Common myeloid progenitor, CD34-positive (primary cell): ENCODE measurements at regions of chr1 and their contacts with region 1.

Region 1: DNA sequence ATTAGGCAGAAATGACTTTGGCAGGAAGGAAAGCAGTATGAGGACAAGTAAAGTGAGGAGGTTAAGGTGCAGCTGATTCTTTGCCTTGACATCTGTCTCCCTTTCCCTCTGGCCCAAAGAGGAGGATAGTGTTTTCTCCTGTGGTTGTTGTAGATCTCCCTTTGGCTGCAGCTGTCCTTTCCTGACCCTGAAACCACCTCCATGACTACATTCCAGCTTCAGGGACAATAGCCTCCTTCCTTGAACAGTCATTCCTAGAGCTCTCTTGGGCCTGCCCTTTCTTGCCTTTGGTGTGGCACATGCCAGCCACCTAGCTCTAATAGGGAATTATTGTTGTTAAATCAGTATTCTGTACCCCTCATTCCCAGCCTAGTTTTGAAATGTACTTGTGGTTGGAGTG is 6.2 kb downstream of the ZMYM1 start:
- DNase-seq: no peak
- H3K4me3 ChIP-seq: no peak overlapping the region
- H3K27ac ChIP-seq: no peak overlapping the region
- H3K4me1 ChIP-seq: peaks cover 0 to 2% (median 2%) of the 10 kb centered on the region in 4 experiments
- H3K27me3 ChIP-seq: no peaks in the 10 kb centered on the region

Region 2: DNA sequence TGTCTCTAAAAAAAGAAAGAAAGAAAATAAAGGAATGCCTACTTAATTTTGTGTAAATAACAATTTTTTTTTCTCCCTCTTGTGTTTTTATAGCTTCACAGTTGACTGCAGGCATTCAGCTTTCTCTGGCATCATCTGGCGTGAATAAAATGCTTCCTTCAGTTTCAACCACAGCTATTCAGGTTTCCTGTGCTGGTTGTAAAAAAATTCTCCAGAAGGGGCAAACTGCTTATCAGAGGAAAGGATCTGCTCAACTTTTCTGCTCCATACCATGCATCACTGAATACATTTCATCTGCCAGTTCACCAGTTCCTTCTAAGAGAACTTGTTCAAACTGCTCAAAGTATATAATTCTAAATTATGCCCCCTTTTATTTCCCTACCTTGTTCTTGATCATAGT is 11.8 kb after region 1 on chr1:
- CTCF ChIA-PET with region 1: interaction called, 10 read pairs
- POLR2A ChIA-PET with region 1: interaction called, 3 read pairs
- DNase-seq: peak; percentile 86 to 95 (median 92)
- H3K4me3 ChIP-seq: peak overlapping the region in 3 of 7 experiments; percentile 30 to 60 (median 57)
- H3K27ac ChIP-seq: peak overlapping the region; percentile 59 to 77
- H3K4me1 ChIP-seq: peaks cover 5 to 31% (median 22%) of the 10 kb centered on the region in 4 experiments
- H3K27me3 ChIP-seq: no peaks in the 10 kb centered on the region